ENCODE measurements at regions of chr1 and their contacts with region 1.

Region 1: DNA sequence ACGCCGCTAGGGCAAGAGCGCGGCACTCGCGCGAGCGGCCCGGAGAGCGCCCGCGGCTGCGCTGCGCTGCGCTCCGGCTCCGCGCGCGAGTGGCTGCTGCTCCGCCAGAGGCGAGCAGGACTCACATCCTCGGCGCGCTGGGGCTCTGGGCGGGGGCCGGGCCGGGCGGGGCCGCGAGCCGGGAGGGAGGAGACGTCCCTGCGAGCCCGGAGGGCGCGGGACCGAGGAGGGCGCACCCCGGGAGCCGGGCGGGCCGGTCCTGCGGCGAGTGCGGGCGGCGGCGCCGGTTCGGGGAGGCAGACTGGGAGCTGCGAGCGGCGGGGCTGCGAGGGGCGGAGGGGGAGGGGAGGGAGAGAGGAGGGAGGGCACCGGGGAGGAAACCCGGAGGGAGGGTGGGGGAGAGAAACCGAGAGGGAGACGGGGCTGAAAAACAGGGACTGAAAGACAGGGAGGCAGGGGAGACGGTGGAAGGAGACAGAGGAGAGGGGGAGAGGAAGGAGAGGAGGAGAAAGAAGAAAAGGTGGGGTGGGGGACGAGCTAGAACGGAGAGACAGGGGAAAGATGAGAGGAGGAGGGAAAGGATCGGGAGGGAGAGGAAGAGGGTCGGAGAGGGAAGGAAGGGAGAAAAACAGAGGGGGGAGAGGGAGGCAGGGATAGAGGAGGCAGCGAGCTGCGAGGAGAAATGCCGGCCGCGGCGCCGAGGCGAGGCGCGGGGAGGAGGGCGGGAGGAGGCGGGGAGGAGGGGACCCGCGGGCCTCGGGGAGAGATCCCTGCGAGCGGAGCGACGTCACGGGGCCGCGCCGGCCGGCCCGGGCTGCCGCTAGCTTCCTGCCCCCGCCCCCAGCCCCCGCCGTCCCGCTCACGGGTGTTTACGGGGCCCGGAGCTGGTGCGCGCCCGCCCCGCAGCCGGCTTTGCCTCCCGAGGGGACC is at the start of gene CAMK2N1:
- DNase-seq: peak; percentile 66
- ATAC-seq: peak; percentile 73 to 84
- H3K4me3 ChIP-seq: peak within 1 kb of the TSS; percentile 60
- H3K27ac ChIP-seq: peak within 1 kb of the TSS; percentile 82
- H3K4me1 ChIP-seq: peaks cover 24% of the 10 kb centered on the region
- H3K27me3 ChIP-seq: peaks cover 71% of the 10 kb centered on the region
- CTCF ChIP-seq: no peak
- total RNA-seq, gene CAMK2N1: 43.0 TPM

Region 2: DNA sequence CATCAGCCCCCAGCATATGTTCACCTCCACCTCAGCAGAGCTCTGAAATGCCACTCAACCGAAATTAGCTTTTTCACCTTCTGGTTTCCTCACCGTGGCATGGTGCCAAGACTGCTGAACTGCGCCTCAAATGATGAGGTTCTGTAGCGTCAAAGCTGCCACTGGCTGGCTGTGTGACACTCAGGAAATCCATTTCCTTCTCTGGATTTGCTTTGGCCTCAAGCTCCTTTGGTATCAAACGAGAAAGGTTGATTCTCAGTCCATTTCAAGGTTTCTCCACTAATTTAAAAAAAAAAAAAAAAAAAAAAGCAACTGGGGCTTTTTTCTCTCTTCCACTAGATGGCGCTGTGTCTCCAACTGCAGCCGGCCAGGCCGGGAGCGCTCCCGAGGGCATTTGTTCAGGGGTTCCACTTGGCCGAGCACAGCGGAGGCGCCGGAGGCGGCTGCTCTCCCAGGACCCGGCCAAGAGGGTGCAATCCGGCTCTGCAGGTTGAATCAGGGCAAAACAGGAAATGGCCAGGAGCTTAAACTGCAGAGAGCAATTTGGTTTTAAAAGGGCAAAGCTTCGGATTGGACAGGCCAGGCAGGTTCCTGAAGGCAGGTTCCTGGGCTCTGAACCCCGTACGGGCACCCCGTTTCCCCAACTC is 273.0 kb before region 1 on chr1:
- intact Hi-C with region 1: loop called (anchors 5 kb)
- DNase-seq: peak; percentile 78
- ATAC-seq: peak; percentile 88 to 92
- H3K4me3 ChIP-seq: no peak overlapping the region
- H3K27ac ChIP-seq: no peak overlapping the region
- H3K4me1 ChIP-seq: peaks cover 12% of the 10 kb centered on the region
- H3K27me3 ChIP-seq: peaks cover 10% of the 10 kb centered on the region
- CTCF ChIP-seq: peak; percentile 79

Measured in lower lobe of right lung (tissue), 2 donors.